HCT116 (cell line): ENCODE measurements at regions of chr1 and their contacts with region 1.

Region 1: DNA sequence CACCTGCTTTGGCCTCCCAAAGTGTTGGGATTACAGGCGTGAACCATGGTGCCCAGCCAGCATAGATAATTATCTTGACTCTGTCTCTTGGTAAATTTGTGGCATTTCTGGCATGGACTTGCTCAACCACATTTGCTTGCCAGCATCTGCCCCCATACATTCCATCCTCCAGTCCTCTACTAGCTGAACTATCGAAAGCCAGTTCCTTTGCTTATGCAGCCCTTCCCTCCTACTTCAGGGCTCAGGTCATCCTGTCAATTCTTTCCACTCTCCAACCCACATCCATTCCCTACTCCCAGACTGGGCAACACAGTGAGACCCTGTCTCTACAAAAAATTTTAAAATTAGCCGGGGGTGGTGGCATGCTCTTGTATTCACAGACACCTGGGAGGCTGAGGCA is 13.0 kb upstream of the UQCRHL start:
- DNase-seq: no peak
- ATAC-seq: peak; percentile 37; the same call in 1 of the 2 replicates
- H3K4me3 ChIP-seq: no peak overlapping the region
- H3K27ac ChIP-seq: no peak overlapping the region
- H3K4me1 ChIP-seq: peaks cover 5 to 11% of the 10 kb centered on the region in 2 experiments; a peak in 3 of 4 replicates
- H3K27me3 ChIP-seq: no peaks in the 10 kb centered on the region
- CTCF ChIP-seq: no peak
- POLR2A ChIP-seq: no peak
- RAD21 ChIP-seq: no peak

Region 2: DNA sequence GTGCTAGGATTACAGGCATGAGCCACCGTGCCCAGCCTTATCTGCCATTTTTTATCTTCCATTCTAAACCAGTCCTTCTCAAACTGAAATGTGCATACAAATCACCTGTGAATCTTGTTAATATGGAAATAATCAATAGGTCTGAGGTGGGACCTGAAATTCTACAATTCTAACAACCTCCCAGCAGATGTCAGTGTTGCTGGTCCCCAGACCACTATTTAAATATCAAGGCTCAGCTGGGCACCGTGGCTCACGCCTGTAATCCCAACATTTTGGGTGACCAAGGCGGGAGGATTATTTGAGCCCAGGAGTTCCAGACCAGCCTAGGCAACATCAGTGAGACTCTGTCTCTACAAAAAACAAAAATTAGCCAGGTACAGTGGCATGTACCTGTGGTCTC is 17.1 kb before region 1 on chr1:
- CTCF ChIA-PET with region 1: interaction called, 35 read pairs
- POLR2A ChIA-PET with region 1: interaction called, 4 read pairs
- RAD21 ChIA-PET with region 1: interaction called in 1 of 2 experiments, 3 read pairs
- intact Hi-C with region 1: no loop called
- DNase-seq: peak; percentile 58
- ATAC-seq: no peak
- H3K4me3 ChIP-seq: no peak overlapping the region
- H3K27ac ChIP-seq: no peak overlapping the region
- H3K4me1 ChIP-seq: peaks cover 40 to 53% of the 10 kb centered on the region in 2 experiments
- H3K27me3 ChIP-seq: no peaks in the 10 kb centered on the region
- CTCF ChIP-seq: peak in 2 of 3 experiments; percentile 53 to 59; a peak in 4 of 6 replicates
- POLR2A ChIP-seq: no peak
- RAD21 ChIP-seq: no peak

Region 3: DNA sequence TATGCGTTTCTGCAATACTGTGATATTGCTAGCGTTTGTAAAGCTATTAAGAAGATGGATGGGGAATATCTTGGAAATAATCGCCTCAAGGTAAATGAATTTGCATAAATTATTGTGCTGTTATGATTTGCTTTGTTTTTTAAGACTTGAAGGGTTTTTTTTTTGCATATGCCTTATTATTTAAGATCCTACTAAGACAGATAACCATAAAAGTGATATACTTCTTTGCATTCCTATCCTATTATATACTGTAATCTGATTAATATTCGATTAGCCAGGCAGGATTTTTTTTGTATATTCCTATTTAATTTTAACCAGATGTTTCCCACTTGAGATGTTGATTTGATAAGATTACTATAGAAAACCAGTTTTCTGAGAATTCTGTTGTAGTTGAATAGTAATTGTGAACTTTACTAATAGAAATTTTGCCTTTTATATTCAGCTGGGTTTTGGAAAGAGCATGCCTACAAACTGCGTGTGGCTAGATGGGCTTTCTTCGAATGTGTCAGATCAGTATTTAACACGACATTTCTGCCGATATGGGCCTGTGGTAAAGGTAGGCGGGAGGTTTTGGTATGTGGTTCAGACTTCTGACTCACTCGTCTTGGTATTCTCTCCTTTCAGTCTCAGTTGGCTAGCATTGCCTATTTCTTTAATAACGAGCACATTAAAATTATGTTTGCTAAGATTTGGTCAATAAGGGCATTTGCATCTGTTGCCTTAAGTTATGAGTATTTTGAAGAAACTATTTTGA is 98.7 kb after region 1 on chr1:
- CTCF ChIA-PET with region 1: no interaction called
- POLR2A ChIA-PET with region 1: interaction called, 5 read pairs
- RAD21 ChIA-PET with region 1: interaction called in 1 of 2 experiments, 6 read pairs
- intact Hi-C with region 1: loop called (anchors 5 kb)
- DNase-seq: no peak
- ATAC-seq: no peak; the same call in 1 of the 2 replicates
- H3K4me3 ChIP-seq: no peak overlapping the region
- H3K27ac ChIP-seq: no peak overlapping the region
- H3K4me1 ChIP-seq: peaks cover 0 to 36% of the 10 kb centered on the region in 2 experiments; a peak in 2 of 4 replicates
- H3K27me3 ChIP-seq: no peaks in the 10 kb centered on the region
- CTCF ChIP-seq: no peak
- POLR2A ChIP-seq: no peak
- RAD21 ChIP-seq: no peak